Sigmoid colon (tissue), 7 donors: ENCODE measurements at regions of chr3 and their contacts with region 1.

Region 1: DNA sequence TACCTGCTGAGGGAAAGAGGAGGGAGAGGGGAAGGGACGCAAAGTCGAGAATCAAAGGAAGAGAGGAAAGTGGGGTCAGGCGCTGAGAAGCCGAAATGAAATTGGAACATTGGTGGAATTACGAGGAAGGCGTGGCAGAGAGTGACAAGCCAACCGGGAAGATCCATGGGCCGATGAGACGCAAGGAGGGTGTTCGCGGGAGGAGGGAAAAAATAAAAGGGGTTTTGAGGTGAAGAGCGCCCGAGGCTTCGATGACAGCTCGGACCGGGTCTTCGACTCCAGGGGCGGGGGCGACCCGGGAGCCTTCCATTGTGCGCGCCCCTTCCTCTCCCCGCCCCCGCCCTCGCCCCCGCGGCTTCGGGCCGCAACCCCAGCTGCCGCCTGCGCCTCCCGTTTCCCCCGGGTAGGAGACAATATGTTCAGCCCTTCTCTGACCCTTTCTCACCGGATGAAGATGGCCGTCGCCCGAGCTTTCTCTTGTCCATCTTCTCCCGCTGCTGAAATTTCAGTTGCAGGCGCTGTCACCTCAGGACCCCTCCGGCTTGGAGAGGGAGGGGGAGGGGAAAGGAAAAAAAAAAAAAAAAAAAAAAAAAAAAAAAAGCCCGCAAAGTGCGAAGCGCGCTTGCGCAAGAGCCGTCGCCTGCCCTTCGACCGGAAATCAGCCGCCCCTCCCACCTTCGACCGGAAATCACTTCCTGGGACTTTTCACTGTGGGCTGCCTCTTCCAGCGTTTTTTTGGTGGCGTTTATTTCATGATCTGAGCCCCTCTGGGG is at the start of gene SENP7:
- DNase-seq: peak; percentile 92
- H3K4me3 ChIP-seq: peak within 1 kb of the TSS; percentile 76 to 88 (median 82)
- H3K27ac ChIP-seq: peak within 1 kb of the TSS; percentile 94 to 96 (median 95)
- H3K4me1 ChIP-seq: peaks cover 0 to 22% (median 14%) of the 10 kb centered on the region in 4 donors
- H3K27me3 ChIP-seq: peaks cover 0 to under 1% (median 0%) of the 10 kb centered on the region in 3 donors
- CTCF ChIP-seq: no peak
- EP300 ChIP-seq: peak in 1 of 4 donors; percentile 11
- POLR2A ChIP-seq: peak in 1 of 2 donors; percentile 13
- total RNA-seq, gene SENP7: 20.2 to 33.5 (median 30.4) TPM

Region 2: GRCh38 chr3:101561630-101562328 is 48.9 kb after region 1 on chr3 and contains the start of gene TRMT10C:
- intact Hi-C with region 1: loop called (anchors 2 kb)
- DNase-seq: peak; percentile 95
- H3K4me3 ChIP-seq: peak within 1 kb of the TSS; percentile 47 to 74 (median 70)
- H3K27ac ChIP-seq: peak within 1 kb of the TSS; percentile 85 to 90 (median 87)
- H3K4me1 ChIP-seq: peaks cover 0 to 27% (median 16%) of the 10 kb centered on the region in 4 donors
- H3K27me3 ChIP-seq: peaks cover 0 to 27% (median 0%) of the 10 kb centered on the region in 3 donors
- CTCF ChIP-seq: no peak
- EP300 ChIP-seq: no peak
- POLR2A ChIP-seq: peak; percentile 77 to 84
- total RNA-seq, gene TRMT10C: 15.5 to 29.1 (median 19.2) TPM